ENCODE measurements at regions of chr2 and their contacts with region 1.

Region 1: DNA sequence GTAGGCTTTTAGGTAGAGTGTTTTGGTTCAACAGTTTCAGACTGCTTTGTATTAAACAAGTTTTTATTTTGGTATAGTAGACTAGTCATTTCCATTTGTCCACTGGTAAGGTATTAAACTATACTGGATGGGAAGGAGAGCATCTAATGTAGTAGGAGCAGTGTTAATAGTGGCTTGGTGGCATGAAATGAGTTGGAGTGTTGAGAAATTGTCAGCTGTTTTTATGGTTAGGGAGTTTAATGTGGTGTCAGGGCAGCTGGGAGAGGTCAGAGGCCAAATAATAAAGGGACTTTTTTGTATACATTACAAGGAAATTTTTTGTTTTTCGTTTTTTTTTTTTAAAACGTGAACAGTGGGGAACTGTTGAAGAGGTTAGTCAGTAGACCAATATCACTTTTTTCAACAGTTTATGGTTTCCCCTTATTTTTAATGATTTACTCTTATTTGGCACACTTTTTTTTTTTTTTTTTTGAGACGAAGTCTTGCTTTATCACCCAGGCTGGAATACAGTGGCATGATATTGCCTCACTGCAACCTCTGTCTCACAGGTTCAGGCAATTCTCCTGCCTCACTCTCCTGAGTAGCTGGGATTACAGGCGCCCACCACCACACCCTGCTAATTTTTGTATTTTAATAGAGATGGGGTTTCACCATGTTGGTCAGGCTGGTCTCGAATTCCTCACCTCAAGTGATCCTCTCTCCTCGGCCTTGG is 21.2 kb downstream of the ACTR3 start:
- DNase-seq: no peak
- ATAC-seq: peak; percentile 56
- H3K4me3 ChIP-seq: no peak overlapping the region
- H3K27ac ChIP-seq: no peak overlapping the region
- H3K4me1 ChIP-seq: no peaks in the 10 kb centered on the region; the same call in 1 of the 2 replicates
- H3K27me3 ChIP-seq: no peaks in the 10 kb centered on the region
- CTCF ChIP-seq: no peak
- POLR2A ChIP-seq: no peak
- RAD21 ChIP-seq: no peak

Region 2: DNA sequence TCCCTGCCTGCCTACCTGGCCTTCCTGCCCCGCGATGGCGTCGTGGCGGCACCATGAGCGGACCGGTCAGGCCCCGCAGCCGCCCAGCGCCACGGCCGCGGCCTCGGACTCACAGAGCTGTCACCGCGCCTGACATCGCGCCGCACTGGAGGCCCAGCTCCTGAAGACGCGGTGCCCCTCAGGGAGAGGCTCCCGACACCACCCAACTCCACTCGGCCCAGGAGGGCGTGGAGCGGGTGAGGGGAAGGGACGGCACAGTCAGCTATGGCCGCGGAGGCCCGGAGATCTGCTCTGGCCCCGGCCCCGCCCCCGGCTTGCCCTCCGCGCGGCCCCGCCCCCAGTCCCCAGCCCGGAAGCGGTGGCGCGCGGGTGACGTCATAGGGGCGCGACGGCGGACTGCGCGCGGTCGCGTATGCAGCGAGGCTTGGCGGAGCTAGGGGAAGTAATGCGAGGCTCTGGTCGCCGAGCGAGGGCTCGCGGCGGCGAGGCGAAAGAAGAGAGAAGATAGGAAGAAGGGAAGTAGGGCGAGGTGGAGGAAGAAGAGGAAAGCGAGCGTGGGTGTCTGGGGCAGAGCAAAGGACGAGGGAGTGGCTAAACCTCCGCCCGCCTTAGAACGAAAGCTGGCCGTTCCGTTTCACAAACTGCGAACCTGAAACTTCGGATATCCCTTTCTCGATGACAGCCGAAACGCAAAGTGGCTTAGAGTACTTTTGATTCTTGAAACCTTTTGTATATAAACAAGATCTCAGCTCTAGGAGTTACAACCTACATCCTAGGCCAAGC is 154.6 kb before region 1 on chr2 and contains the start of gene SLC35F5:
- CTCF ChIA-PET with region 1: no interaction called
- POLR2A ChIA-PET with region 1: no interaction called
- dilution Hi-C with region 1: no loop called
- in situ Hi-C with region 1: no loop called
- intact Hi-C with region 1: no loop called
- DNase-seq: peak; percentile 86
- ATAC-seq: peak; percentile 98
- H3K4me3 ChIP-seq: peak within 1 kb of the TSS; percentile 87
- H3K27ac ChIP-seq: peak within 1 kb of the TSS; percentile 99
- H3K4me1 ChIP-seq: 0 out of 2 replicates have a peak, but pooled peaks cover 2% of the 10 kb centered on the region
- H3K27me3 ChIP-seq: no peaks in the 10 kb centered on the region
- CTCF ChIP-seq: no peak
- POLR2A ChIP-seq: peak; percentile 89
- RAD21 ChIP-seq: no peak
- total RNA-seq, gene SLC35F5: 93.4 and 106 TPM in 2 replicates

Region 3: GRCh38 chr2:113899166-113899565 is 12.0 kb before region 1 on chr2:
- CTCF ChIA-PET with region 1: interaction called, 4 read pairs
- POLR2A ChIA-PET with region 1: no interaction called
- dilution Hi-C with region 1: no loop called
- in situ Hi-C with region 1: no loop called
- intact Hi-C with region 1: loop called (anchors 2 kb)
- DNase-seq: no peak
- ATAC-seq: no peak
- H3K4me3 ChIP-seq: no peak overlapping the region
- H3K27ac ChIP-seq: no peak overlapping the region
- H3K4me1 ChIP-seq: peaks cover 21% of the 10 kb centered on the region
- H3K27me3 ChIP-seq: no peaks in the 10 kb centered on the region
- CTCF ChIP-seq: no peak
- POLR2A ChIP-seq: no peak
- RAD21 ChIP-seq: no peak

Region 4: GRCh38 chr2:114237331-114237730 is 326.2 kb after region 1 on chr2:
- CTCF ChIA-PET with region 1: no interaction called
- POLR2A ChIA-PET with region 1: no interaction called
- dilution Hi-C with region 1: no loop called
- in situ Hi-C with region 1: no loop called
- intact Hi-C with region 1: no loop called
- DNase-seq: no peak
- ATAC-seq: no peak
- H3K4me3 ChIP-seq: no peak overlapping the region
- H3K27ac ChIP-seq: no peak overlapping the region
- H3K4me1 ChIP-seq: no peaks in the 10 kb centered on the region
- H3K27me3 ChIP-seq: no peaks in the 10 kb centered on the region
- CTCF ChIP-seq: no peak
- POLR2A ChIP-seq: no peak
- RAD21 ChIP-seq: no peak

Measured in IMR-90 (cell line).